Activated T-helper 1 cell treated with anti-CD3 and anti-CD28 coated beads, Interleukin-12 subunit alpha, Interleukin-12 subunit beta, Interleukin-2, Interleukin-4 antibody, amounts not matched to agents 30 ng/mL and 10 ng/mL and 1 ng/mL, durations not matched to agents 14 hours and 24 hours and 36 hours (primary cell): ENCODE measurements at regions of chrX and their contacts with region 1.

Region 1: GRCh38 chrX:1011642-1012283 is 200.7 kb downstream of the CRLF2 start:
- DNase-seq: no peak
- H3K4me3 Mint-ChIP-seq: no peak overlapping the region
- H3K27ac Mint-ChIP-seq: peak overlapping the region; percentile 19
- H3K4me1 Mint-ChIP-seq: no peaks in the 10 kb centered on the region
- H3K27me3 Mint-ChIP-seq: peaks cover 1% of the 10 kb centered on the region

Region 2: DNA sequence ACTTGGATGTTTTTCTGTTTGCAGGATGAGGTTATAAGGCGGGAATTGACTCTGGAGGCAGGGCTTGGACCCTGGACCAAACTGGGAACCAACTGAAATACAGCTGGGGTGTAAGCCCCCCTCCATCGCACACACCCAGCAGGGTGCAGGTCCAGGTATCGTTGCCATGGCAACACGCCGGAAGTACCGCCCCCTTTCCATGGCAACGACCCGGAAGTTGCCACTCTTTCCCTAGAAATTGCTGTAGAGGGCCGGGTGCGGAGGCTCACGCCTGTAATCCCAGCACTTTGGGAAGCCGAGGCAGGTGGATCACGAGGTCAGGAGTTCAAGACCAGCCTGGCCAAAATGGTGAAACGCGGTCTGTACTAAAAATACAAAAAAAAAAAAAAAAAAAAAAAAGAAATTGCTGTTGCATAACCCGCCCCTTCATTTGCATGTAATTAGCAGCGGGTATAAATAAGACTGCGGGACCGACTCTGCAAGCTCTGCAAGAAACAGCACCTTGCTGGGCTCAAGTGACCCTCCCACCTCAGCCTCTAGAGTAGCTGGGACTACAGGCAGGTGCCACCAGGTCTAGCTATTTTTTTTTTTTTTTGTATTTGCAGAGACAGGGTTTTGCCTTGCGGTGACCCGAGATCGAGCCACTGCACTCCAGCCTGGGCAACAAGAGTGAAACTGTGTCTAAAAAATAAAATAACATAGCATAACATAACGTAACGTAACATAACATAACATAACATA is 61.0 kb after region 1 on chrX:
- intact Hi-C with region 1: loop called (anchors 5 kb)
- DNase-seq: no peak
- H3K4me3 Mint-ChIP-seq: no peak overlapping the region
- H3K27ac Mint-ChIP-seq: no peak overlapping the region
- H3K4me1 Mint-ChIP-seq: peaks cover 6% of the 10 kb centered on the region
- H3K27me3 Mint-ChIP-seq: no peaks in the 10 kb centered on the region